SK-N-SH (cell line): ENCODE measurements at regions of chr19 and their contacts with region 1.

Region 1: GRCh38 chr19:18007044-18007916 is 690 bp upstream of the ARRDC2 start:
- DNase-seq: peak; percentile 92
- H3K4me3 ChIP-seq: peak overlapping the region; percentile 47 to 73
- H3K27ac ChIP-seq: peak overlapping the region in 1 of 2 experiments; percentile 42; a peak in 2 of 4 replicates
- H3K4me1 ChIP-seq: peaks cover 6 to 13% of the 10 kb centered on the region in 2 experiments; a peak in 2 of 4 replicates
- H3K27me3 ChIP-seq: no peaks in the 10 kb centered on the region
- CTCF ChIP-seq: peak; percentile 88
- EP300 ChIP-seq: no peak
- RAD21 ChIP-seq: peak; percentile 98

Region 2: GRCh38 chr19:17938092-17938845 is 69.0 kb before region 1 on chr19:
- CTCF ChIA-PET with region 1: interaction called, 464 read pairs
- POLR2A ChIA-PET with region 1: no interaction called
- DNase-seq: peak; percentile 92
- H3K4me3 ChIP-seq: no peak overlapping the region; a peak in 1 of 4 replicates
- H3K27ac ChIP-seq: no peak overlapping the region; a peak in 1 of 4 replicates
- H3K4me1 ChIP-seq: peaks cover 0 to 7% of the 10 kb centered on the region in 2 experiments; a peak in 1 of 4 replicates
- H3K27me3 ChIP-seq: no peaks in the 10 kb centered on the region
- CTCF ChIP-seq: peak; percentile 95
- EP300 ChIP-seq: no peak
- RAD21 ChIP-seq: peak; percentile 94

Region 3: DNA sequence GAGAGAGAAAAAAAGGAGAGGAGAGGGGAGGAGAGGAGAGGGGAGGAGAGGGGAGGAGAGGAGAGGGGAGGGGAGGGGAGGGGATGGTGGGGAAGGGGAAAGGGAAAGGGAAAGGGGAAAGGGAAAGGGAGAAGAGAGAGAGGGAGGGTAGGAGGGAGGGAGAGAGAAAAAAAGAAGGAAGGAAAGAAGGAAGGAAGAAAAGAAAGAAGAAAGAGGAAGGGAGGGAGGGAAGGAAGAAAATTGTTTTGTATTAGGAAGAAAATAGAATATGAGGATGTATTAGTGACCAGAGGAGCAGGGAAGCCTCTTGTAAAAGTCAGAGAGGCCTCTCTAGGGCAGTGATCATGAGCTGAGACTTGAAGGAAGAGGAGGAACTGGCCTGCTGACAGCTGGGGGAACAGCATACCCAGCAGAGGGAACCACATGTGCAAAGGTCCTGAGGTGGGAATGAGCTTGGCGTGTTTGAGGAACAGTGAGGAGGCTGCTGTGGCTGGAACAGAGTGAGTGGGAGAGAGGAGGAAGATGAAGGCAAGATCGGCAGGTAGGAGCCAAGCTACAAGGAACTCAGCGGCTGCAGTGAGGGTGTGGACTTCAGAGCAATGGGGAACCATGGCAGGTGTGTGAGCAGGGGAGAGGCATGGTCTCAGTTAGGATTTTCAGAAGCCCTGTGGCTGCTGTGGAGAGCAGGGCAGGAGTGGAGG is 50.0 kb before region 1 on chr19:
- CTCF ChIA-PET with region 1: no interaction called
- POLR2A ChIA-PET with region 1: no interaction called
- DNase-seq: no peak
- H3K4me3 ChIP-seq: no peak overlapping the region
- H3K27ac ChIP-seq: no peak overlapping the region
- H3K4me1 ChIP-seq: peaks cover 0 to 3% of the 10 kb centered on the region in 2 experiments; a peak in 1 of 4 replicates
- H3K27me3 ChIP-seq: peaks cover 29% of the 10 kb centered on the region
- CTCF ChIP-seq: no peak
- EP300 ChIP-seq: no peak
- RAD21 ChIP-seq: no peak

Region 4: DNA sequence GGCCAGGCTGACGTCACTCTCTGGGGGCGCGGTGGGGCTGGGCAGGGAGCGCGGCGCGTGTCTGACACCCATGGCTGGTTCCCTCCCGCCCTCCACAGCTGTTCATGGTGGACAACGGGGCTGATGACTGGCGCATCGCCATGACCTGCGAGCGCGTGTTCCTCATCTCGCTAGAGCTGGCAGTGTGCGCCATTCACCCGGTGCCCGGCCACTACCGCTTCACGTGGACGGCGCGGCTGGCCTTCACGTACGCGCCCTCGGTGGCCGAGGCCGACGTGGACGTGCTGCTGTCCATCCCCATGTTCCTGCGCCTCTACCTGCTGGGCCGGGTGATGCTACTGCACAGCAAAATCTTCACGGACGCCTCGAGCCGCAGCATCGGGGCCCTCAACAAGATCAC is 25.7 kb before region 1 on chr19:
- CTCF ChIA-PET with region 1: no interaction called
- POLR2A ChIA-PET with region 1: no interaction called
- DNase-seq: no peak
- H3K4me3 ChIP-seq: no peak overlapping the region
- H3K27ac ChIP-seq: no peak overlapping the region
- H3K4me1 ChIP-seq: no peaks in the 10 kb centered on the region
- H3K27me3 ChIP-seq: no peaks in the 10 kb centered on the region
- CTCF ChIP-seq: no peak
- EP300 ChIP-seq: no peak
- RAD21 ChIP-seq: no peak

Region 5: DNA sequence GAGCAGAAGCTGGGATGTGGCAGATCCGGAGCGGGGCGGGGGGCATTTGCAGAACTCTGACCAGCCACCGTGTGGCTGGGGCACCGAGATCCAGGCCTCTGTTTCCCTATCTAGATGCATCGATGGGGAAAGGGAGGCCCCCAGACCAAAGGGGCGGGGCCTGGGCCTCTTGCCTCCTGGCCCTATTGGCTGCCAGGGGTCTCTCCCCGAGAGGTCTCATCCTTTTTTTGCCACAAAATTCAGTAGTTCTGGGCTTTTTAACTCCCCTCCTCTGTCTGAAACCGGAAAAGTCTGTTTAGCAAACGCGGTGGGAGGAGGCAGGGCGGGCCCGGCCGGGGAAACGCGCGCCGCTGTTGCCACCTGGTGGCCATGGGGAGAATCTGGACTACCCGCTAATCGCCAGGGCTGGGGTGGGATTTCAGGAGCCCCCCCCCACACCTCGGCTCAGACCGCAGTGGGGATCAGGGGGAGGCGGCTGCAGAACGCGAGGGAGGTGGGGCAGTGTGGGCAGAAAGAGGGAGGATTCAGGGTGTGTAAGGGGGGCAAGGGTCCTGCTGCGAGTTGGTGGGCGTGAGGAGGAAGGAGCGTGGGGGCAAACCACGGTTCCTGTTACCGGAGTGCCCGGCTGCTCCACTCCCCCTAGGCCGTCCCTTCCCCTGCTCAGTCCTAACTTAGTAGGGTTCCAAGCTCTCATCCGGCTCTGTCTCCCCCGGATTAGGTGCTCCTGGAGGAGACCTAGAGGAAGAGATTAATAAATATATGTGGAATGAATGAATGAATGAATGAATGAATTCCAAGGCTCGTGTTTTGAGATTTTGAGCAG is 51.1 kb after region 1 on chr19:
- CTCF ChIA-PET with region 1: interaction called, 118 read pairs
- POLR2A ChIA-PET with region 1: no interaction called
- DNase-seq: peak; percentile 94
- H3K4me3 ChIP-seq: peak overlapping the region; percentile 24 to 51; a peak in 2 of 4 replicates
- H3K27ac ChIP-seq: peak overlapping the region in 1 of 2 experiments; percentile 48; a peak in 2 of 4 replicates
- H3K4me1 ChIP-seq: peaks cover 3 to 5% of the 10 kb centered on the region in 2 experiments; a peak in 2 of 4 replicates
- H3K27me3 ChIP-seq: no peaks in the 10 kb centered on the region
- CTCF ChIP-seq: peak; percentile 97
- EP300 ChIP-seq: no peak
- RAD21 ChIP-seq: peak; percentile 88

Region 6: DNA sequence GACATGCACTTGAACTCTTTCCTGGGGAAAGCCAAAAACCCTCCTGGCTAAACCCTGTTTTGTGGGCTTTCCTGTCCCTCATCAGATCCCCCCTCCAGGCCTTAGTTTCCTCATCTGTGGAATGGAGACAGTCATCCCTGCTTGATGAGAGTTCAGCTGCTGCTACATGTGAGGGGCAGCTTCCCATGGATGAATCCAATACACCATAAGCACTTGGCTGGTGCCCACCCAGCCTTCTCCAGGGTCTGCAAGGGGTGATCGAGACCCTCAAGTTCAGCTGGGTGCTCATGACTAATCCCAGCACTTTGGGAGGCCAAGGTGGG is 57.9 kb after region 1 on chr19:
- CTCF ChIA-PET with region 1: interaction called, 118 read pairs
- POLR2A ChIA-PET with region 1: no interaction called
- DNase-seq: no peak
- H3K4me3 ChIP-seq: no peak overlapping the region
- H3K27ac ChIP-seq: no peak overlapping the region
- H3K4me1 ChIP-seq: no peaks in the 10 kb centered on the region
- H3K27me3 ChIP-seq: no peaks in the 10 kb centered on the region
- CTCF ChIP-seq: no peak
- EP300 ChIP-seq: no peak
- RAD21 ChIP-seq: no peak

Region 7: GRCh38 chr19:18070181-18070580 is 62.9 kb after region 1 on chr19:
- CTCF ChIA-PET with region 1: interaction called, 17 read pairs
- POLR2A ChIA-PET with region 1: no interaction called
- DNase-seq: peak; percentile 6
- H3K4me3 ChIP-seq: no peak overlapping the region
- H3K27ac ChIP-seq: no peak overlapping the region
- H3K4me1 ChIP-seq: no peaks in the 10 kb centered on the region
- H3K27me3 ChIP-seq: no peaks in the 10 kb centered on the region
- CTCF ChIP-seq: no peak
- EP300 ChIP-seq: no peak
- RAD21 ChIP-seq: no peak